ENCODE measurements at regions of chr6 and their contacts with region 1.

Region 1: DNA sequence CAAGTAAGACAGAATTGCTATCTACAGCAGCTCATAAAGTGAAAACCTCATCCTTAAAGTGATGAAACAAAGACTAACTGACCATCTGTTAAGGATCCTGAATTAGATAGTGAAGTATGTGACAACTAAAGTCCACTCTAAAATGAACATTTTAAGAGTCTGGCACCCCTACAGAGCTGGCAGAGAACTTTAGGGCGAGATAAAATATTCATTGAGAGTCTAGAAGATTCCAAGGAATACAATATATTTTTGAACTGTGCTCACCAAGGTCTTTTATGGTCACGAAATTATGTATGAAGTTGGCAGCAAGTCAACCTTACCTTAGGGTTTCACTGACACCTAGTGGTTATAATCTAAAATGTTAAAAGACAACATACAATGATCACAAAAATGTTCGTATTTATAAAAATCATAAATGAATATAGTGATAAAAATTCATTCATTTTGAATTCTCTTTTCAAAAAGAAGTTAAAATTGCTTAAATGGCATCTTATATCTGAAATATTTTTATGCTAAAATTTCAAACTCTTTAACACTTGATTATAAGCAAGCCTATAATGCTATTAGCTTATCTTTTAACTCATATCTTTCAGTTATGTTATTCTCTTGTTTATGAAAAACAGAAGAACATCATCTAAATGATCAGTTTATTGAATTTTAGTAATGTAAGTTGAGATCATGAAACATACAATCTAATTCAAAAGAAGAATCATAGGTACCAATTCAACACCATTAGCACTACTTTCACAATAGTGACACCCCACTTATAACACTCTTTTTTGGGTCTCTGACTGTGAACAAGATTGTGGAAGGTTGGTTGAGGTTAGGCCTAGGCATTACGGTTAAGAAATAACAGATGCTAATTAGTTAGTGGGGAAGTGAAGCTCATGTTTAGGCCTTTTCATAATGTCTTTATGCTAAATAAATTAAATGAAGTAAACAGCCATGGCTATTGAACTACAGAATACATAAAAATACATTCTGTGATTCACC is 27.5 kb downstream of the RSPH3 start:
- DNase-seq: peak in 1 of 2 experiments; percentile 12
- H3K4me3 ChIP-seq: no peak overlapping the region
- H3K4me3 Mint-ChIP-seq: no peak overlapping the region
- H3K27ac Mint-ChIP-seq: no peak overlapping the region
- H3K4me1 ChIP-seq: no peaks in the 10 kb centered on the region
- H3K4me1 Mint-ChIP-seq: no peaks in the 10 kb centered on the region
- H3K27me3 ChIP-seq: no peaks in the 10 kb centered on the region
- H3K27me3 Mint-ChIP-seq: no peaks in the 10 kb centered on the region
- CTCF ChIP-seq: peak; percentile 30 to 67

Region 2: DNA sequence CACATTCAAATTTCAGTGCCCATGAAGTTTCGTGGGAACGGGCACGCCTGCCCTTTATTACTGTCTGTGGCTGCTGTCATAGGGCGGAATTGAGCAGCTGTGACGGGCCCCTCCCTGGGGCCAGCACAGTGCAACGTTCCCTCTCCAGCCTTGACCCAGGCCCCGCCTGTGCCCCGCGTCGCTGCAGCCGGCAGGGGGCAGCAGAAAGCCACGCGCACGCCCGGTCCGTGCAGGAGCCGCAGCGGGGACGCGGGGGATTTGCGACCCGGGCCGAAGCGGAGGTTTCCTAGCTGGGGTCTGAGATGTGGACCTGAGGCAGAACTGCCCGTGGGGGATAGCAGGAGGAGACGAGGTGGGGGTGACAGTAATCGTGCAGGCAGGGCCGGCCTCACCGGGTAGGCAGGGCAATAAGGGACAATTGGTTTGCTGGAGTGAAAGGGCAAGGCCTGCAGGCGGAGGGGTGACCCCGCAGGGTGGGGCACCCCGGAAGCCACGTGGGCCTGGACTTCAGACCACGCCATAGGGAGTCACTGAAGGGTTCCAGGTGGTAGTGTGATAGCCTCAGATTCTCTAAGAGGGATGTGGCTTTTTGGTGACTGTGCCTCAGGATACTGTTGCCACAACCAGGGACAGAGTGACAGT is 268.2 kb before region 1 on chr6:
- CTCF ChIA-PET with region 1: interaction called, 3 read pairs
- POLR2A ChIA-PET with region 1: no interaction called
- intact Hi-C with region 1: loop called (anchors 1 kb)
- DNase-seq: peak; percentile 80 to 89
- H3K4me3 ChIP-seq: peak overlapping the region; percentile 47
- H3K4me3 Mint-ChIP-seq: peak overlapping the region; percentile 84
- H3K27ac Mint-ChIP-seq: peak overlapping the region; percentile 92
- H3K4me1 ChIP-seq: peaks cover 43% of the 10 kb centered on the region
- H3K4me1 Mint-ChIP-seq: peaks cover 21% of the 10 kb centered on the region
- H3K27me3 ChIP-seq: no peaks in the 10 kb centered on the region
- H3K27me3 Mint-ChIP-seq: no peaks in the 10 kb centered on the region
- CTCF ChIP-seq: peak; percentile 91 to 96

Region 3: GRCh38 chr6:158793432-158793831 is 179.1 kb before region 1 on chr6:
- CTCF ChIA-PET with region 1: no interaction called
- POLR2A ChIA-PET with region 1: no interaction called
- intact Hi-C with region 1: loop called (anchors 1 kb)
- DNase-seq: peak in 1 of 2 experiments; percentile 64
- H3K4me3 ChIP-seq: no peak overlapping the region
- H3K4me3 Mint-ChIP-seq: no peak overlapping the region
- H3K27ac Mint-ChIP-seq: no peak overlapping the region
- H3K4me1 ChIP-seq: peaks cover 29% of the 10 kb centered on the region
- H3K4me1 Mint-ChIP-seq: no peaks in the 10 kb centered on the region
- H3K27me3 ChIP-seq: no peaks in the 10 kb centered on the region
- H3K27me3 Mint-ChIP-seq: no peaks in the 10 kb centered on the region
- CTCF ChIP-seq: peak; percentile 45 to 50

Region 4: GRCh38 chr6:158926416-158926815 is 46.1 kb before region 1 on chr6:
- CTCF ChIA-PET with region 1: no interaction called
- POLR2A ChIA-PET with region 1: no interaction called
- intact Hi-C with region 1: no loop called
- DNase-seq: no peak
- H3K4me3 ChIP-seq: no peak overlapping the region
- H3K4me3 Mint-ChIP-seq: no peak overlapping the region
- H3K27ac Mint-ChIP-seq: no peak overlapping the region
- H3K4me1 ChIP-seq: no peaks in the 10 kb centered on the region
- H3K4me1 Mint-ChIP-seq: no peaks in the 10 kb centered on the region
- H3K27me3 ChIP-seq: no peaks in the 10 kb centered on the region
- H3K27me3 Mint-ChIP-seq: no peaks in the 10 kb centered on the region
- CTCF ChIP-seq: no peak

Region 5: DNA sequence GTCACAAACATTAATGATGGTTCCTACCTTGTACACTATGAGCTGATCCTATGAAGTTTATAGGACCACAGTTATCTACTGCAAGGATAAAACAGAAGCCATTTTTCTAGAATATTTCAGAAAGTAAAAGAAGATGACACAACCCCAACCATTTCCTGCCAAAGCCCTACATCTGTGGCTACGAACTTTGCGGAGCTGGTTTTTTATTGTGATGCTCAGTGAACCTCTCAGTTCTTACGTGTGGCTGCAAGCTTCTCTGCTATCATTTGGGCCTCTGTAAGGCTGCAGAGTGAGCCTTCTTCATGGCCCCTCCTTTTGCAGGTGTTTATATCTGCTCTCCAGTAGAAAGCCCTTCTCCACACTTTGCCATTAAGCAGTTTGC is 90.0 kb after region 1 on chr6:
- CTCF ChIA-PET with region 1: no interaction called
- POLR2A ChIA-PET with region 1: no interaction called
- intact Hi-C with region 1: no loop called
- DNase-seq: no peak
- H3K4me3 ChIP-seq: no peak overlapping the region
- H3K4me3 Mint-ChIP-seq: no peak overlapping the region
- H3K27ac Mint-ChIP-seq: no peak overlapping the region
- H3K4me1 ChIP-seq: no peaks in the 10 kb centered on the region
- H3K4me1 Mint-ChIP-seq: no peaks in the 10 kb centered on the region
- H3K27me3 ChIP-seq: peaks cover 2% of the 10 kb centered on the region
- H3K27me3 Mint-ChIP-seq: peaks cover 24% of the 10 kb centered on the region
- CTCF ChIP-seq: no peak